GM10248 (cell line): ENCODE measurements at regions of chr13 and their contacts with region 1.

Region 1: DNA sequence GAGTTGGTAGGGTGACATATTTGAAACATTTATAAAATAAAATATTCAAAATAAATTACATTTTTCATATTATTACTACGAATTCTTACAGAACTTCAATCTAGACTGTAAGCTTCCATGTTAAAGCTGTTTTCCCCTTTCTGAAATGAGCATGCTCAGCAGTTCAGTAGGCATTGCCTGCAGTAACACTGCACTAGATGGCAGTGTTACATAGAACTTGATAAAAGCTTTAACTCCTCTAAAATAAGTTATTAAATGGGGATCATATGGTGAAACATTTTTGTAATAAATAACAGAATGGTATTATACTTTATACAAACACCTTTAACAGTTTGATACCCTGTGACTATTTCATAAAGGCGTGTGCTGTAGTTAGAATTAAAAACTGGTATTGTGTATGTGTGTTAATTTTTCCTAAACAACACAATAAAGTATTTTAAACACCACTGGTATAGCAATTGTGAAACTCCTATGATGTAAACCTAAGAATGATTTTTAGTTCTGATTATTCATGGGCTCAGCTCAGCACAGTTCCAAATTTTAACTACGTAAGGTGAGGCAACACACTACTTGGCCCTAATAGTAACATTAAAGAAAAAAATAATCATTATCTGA is 11.6 kb upstream of the GPR18 start:
- DNase-seq: peak; percentile 37
- CTCF ChIP-seq: peak; percentile 79

Region 2: GRCh38 chr13:98869408-98870090 is 400.2 kb before region 1 on chr13:
- CTCF ChIA-PET with region 1: interaction called, 10 read pairs
- POLR2A ChIA-PET with region 1: no interaction called
- DNase-seq: no peak
- CTCF ChIP-seq: peak; percentile 45

Region 3: DNA sequence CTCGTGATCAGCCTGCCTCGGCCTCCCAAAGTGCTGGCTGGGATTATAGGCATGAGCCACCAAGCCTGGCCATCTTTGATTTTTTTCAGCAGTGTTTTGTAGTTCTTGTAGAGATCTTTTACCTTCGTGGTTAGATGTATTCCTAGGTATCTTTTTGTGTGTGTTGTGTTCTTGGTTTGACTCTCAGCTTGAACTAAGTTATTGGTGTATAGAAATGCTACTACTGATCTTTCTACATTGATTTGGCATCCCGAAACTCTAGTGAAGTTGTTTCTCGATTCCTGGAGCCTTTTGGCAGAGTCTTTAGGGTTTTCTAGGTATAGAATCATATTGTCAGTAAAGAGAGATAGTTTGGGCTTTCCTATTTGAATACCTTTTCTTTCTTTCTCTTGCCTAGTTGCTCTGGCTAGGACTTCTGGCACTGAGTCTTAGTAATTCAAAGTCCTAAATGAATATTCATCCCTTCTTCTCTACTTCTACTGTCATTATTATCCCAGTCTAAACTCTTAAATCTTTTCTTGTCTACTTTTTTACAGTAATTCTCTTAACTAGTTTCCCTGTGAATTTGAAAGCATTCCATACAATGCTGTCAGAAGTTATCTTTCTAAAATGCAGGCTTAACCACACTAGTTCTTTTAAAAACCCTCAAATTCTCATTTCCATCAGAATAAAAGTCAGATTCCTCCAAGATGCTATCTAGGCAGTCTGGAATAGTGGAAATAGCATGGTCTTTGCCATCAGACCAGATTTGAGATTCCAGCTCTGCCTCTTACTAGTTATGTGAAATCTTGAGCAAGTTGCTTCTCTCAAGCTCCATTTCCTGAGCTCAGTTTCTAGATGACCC is 18.5 kb before region 1 on chr13:
- CTCF ChIA-PET with region 1: interaction called, 19 read pairs
- POLR2A ChIA-PET with region 1: no interaction called
- DNase-seq: no peak
- CTCF ChIP-seq: no peak

Region 4: GRCh38 chr13:99296398-99296797 is 26.7 kb after region 1 on chr13:
- CTCF ChIA-PET with region 1: interaction called, 23 read pairs
- POLR2A ChIA-PET with region 1: no interaction called
- DNase-seq: no peak
- CTCF ChIP-seq: no peak

Region 5: GRCh38 chr13:99366075-99366987 is 96.6 kb after region 1 on chr13:
- CTCF ChIA-PET with region 1: interaction called, 15 read pairs
- POLR2A ChIA-PET with region 1: no interaction called
- DNase-seq: no peak
- CTCF ChIP-seq: no peak

Region 6: DNA sequence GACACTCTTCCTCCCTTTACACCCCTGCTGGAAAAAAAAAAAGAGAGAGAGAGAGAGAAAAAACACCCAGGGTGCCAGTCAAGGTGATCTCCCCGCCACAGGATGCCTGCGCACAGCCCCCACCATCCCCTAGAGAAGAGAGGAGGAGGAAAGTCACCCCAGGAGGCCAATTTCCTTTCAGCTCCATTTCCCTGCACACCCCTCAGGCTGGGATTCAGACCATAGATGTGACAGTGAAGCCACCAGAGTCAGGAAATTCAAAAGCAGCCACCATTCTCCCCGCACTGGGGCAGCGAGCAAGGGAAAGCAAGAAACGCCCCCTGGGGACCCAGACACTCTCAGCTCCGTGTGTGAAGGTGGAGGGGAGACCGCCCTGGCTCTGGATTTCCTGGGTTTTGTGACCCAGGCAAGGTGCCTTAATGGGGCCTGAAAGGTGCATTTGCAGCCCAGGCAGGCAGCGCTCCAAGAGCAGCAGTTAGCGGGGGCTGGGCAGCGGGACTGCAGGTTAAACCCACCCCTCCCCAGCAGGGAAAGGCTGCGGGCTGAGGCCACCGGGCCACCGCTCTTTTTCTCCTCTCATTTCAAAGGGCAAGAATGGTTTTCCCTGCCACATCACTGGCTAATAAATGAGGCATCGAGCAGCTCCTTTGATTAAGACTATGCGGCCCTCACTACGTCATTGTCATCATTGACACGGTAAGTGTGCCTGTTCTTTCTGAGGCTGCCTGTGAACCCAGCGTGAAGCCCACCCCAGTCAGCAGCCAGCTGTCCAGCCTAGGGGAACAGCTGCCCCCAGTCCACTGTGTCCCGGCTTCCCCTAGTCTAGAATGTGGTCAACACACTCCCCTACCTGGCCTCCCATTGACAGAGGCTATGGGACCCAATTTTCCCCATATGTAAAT is 147.7 kb after region 1 on chr13:
- CTCF ChIA-PET with region 1: interaction called, 17 read pairs
- POLR2A ChIA-PET with region 1: no interaction called
- DNase-seq: no peak
- CTCF ChIP-seq: no peak

Region 7: DNA sequence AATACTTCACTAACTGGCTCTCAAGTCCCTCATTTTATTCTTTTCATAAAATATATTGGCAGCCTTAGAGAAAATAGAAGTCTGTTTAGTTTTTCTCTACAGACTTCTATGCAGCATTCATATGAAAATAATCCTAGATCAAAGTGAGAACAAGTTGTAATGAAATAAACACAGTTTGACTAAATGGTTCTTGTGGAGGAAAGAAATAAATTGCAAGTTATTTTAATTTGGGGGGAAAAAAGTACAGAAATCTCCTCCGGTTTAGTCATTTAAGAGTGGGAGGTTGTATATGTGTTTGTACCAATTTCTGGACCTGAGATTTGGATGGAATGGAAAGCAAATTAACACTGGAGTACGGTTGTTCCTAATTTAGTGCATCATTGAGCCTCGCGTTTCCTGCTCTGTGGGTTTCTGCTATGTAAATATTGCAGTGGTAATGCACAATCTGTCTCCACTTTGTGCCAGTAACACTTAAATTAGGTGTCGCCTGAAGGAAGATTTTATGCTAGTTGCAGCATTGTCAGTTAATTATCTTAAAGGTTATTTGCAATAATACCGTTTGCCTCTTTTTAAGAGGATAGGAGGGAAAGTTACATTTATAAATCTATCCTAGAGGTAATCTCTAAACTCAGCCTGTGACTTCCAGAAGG is 601.6 kb after region 1 on chr13:
- CTCF ChIA-PET with region 1: no interaction called
- POLR2A ChIA-PET with region 1: no interaction called
- DNase-seq: no peak
- CTCF ChIP-seq: no peak